Gastrocnemius medialis (tissue), 4 donors: ENCODE measurements at regions of chr15 and their contacts with region 1.

Region 1: GRCh38 chr15:38440353-38441129 is 13.4 kb upstream of the FAM98B start:
- DNase-seq: peak; percentile 32 to 49
- ATAC-seq: peak; percentile 96 to 97
- H3K4me3 ChIP-seq: peak overlapping the region in 1 of 4 donors; percentile 2
- H3K27ac ChIP-seq: peak overlapping the region in 1 of 4 donors; percentile 55
- H3K4me1 ChIP-seq: peaks cover 0 to 3% of the 10 kb centered on the region in 2 donors
- H3K27me3 ChIP-seq: no peaks in the 10 kb centered on the region
- CTCF ChIP-seq: peak; percentile 80 to 95 (median 91)
- POLR2A ChIP-seq: no peak

Region 2: GRCh38 chr15:38536201-38536676 is 95.7 kb after region 1 on chr15:
- in situ Hi-C with region 1: no loop called
- intact Hi-C with region 1: no loop called
- DNase-seq: no peak
- ATAC-seq: no peak
- H3K4me3 ChIP-seq: no peak overlapping the region
- H3K27ac ChIP-seq: no peak overlapping the region
- H3K4me1 ChIP-seq: no peaks in the 10 kb centered on the region
- H3K27me3 ChIP-seq: no peaks in the 10 kb centered on the region
- CTCF ChIP-seq: no peak
- POLR2A ChIP-seq: no peak

Region 3: DNA sequence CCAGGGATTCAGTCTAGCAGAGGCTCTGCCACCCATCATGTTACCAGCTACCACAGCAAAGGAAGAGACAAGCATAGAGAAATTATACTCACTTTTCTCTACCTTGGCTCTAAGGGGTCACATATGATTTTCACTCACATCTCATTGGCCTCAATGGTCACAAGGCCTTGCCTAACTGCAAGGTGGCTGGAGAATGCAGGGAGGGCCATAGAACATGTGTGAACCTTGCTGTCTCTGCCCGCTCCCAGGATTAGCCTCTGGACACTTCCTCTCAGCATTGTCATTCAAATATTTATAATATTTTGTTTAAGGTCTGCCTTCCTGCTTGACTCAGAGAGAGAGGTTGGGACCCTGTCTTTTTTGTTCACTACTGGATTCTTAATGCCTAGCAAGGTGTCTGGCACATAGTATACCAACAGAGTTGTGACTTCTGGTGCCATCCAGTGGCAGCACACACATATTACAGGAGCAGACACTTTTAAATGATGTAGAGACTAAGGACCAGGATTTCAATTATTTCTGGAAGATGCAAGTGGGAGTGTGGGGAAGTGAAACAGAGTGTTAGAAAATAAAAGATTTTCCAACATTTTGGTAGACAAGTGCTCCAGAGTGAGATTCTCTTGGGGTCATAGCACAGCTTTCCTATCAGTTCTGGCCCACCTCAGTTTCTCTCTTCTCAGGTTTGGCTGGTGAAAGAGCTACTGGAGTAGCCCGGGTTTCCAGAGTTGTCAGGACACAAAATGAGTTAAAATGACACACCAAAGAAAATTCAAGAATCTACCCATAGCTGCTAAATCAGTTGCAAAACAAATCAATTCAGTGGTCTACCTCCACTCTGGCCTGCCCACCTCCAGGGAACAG is 243.1 kb after region 1 on chr15:
- in situ Hi-C with region 1: loop called in 1 of 4 experiments (anchors 10 kb)
- intact Hi-C with region 1: no loop called
- DNase-seq: peak in 1 of 2 donors; percentile 19
- ATAC-seq: no peak
- H3K4me3 ChIP-seq: no peak overlapping the region
- H3K27ac ChIP-seq: no peak overlapping the region
- H3K4me1 ChIP-seq: no peaks in the 10 kb centered on the region
- H3K27me3 ChIP-seq: no peaks in the 10 kb centered on the region
- CTCF ChIP-seq: peak in 4 of 5 experiments; percentile 33 to 54 (median 46)
- POLR2A ChIP-seq: no peak

Region 4: GRCh38 chr15:38690689-38691332 is 250.3 kb after region 1 on chr15:
- in situ Hi-C with region 1: loop called (anchors 5 to 10 kb)
- intact Hi-C with region 1: loop called (anchors 5 kb)
- DNase-seq: peak in 1 of 2 donors; percentile 29
- ATAC-seq: no peak
- H3K4me3 ChIP-seq: no peak overlapping the region
- H3K27ac ChIP-seq: no peak overlapping the region
- H3K4me1 ChIP-seq: no peaks in the 10 kb centered on the region
- H3K27me3 ChIP-seq: no peaks in the 10 kb centered on the region
- CTCF ChIP-seq: peak in 4 of 5 experiments; percentile 22 to 75 (median 56)
- POLR2A ChIP-seq: no peak

Region 5: GRCh38 chr15:38699633-38700230 is 259.2 kb after region 1 on chr15:
- in situ Hi-C with region 1: loop called in 3 of 4 experiments (anchors 5 to 10 kb)
- intact Hi-C with region 1: loop called (anchors 5 kb)
- DNase-seq: peak; percentile 6 to 17
- ATAC-seq: no peak
- H3K4me3 ChIP-seq: no peak overlapping the region
- H3K27ac ChIP-seq: no peak overlapping the region
- H3K4me1 ChIP-seq: no peaks in the 10 kb centered on the region
- H3K27me3 ChIP-seq: no peaks in the 10 kb centered on the region
- CTCF ChIP-seq: peak; percentile 40 to 73 (median 47)
- POLR2A ChIP-seq: no peak